ENCODE measurements at regions of chr1 and their contacts with region 1.

Region 1: DNA sequence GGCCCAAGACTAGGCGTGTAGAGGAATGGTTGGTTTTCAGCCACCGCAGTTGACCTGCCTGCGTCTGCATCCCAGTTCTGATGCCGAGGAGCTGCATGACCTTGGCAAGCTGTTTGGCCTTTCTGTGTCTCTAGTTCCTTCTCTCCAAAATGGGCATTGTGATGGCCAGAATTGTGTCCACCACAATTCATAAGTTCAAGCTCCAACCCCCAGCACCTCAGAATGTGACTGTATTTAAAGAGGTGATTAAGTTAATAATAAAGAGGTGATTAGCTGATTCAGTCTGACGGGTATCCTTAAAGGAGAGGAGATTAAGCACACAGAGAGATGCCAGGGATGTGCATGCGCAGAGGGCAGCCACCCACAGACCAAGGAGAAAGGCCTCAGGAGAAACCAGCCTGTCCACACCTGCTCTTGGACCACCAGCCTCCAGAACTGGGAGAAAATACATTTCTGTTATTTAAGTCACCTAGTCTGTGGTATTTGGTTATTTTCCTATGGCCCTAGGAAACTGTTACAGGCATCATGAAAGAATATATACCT is 28.5 kb downstream of the MAB21L3 start:
- DNase-seq: no peak
- ATAC-seq: no peak
- H3K4me3 Mint-ChIP-seq: no peak overlapping the region
- H3K27ac Mint-ChIP-seq: no peak overlapping the region
- H3K4me1 Mint-ChIP-seq: peaks cover 5% of the 10 kb centered on the region
- H3K27me3 Mint-ChIP-seq: peaks cover 5% of the 10 kb centered on the region
- CTCF ChIP-seq: no peak

Region 2: DNA sequence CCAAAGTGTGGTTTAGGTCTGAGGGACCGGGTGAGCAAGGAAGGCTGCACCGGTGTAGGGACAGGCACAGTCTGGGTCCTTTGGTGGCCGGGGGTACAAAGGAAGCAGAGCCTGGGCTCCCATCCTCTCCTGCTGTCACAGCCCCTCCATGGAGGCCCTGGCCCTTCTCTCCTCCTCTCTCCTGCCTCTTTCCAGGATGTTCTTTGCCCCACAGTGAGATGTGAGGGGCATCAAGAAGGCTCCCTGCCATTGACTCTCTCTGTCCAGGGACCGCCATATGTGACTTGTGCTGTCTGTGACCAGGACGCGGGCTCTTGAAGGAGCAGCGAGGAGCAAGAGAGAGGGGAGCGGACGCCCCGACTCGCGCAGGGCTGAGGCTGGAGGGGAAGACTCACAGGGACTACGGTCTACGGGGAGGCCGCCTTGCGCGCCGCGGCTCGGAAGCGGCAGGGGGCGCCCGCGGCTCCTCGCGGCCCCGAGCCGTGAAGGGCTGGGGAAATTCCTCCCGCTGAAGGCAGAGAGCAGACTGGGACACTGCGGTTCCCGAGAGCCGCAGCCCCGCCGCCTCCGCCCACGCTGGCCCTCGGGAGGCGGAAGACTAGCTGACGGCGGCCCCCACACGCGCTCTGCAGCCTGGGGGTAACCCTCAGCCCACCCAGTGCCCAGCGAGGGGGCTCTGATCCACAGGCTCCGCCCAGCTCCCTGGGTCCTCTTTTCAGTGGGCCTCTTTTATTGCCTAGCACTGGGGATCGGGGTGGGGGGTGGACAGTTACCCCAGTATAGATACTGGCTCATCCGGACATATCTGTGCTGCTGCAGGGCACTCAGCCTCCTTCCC is 12.3 kb after region 1 on chr1:
- CTCF ChIA-PET with region 1: interaction called, 73 read pairs
- POLR2A ChIA-PET with region 1: no interaction called
- intact Hi-C with region 1: no loop called
- DNase-seq: peak; percentile 76
- ATAC-seq: peak; percentile 98
- H3K4me3 Mint-ChIP-seq: peak overlapping the region; percentile 66
- H3K27ac Mint-ChIP-seq: peak overlapping the region; percentile 19
- H3K4me1 Mint-ChIP-seq: peaks cover 3% of the 10 kb centered on the region
- H3K27me3 Mint-ChIP-seq: peaks cover 4% of the 10 kb centered on the region
- CTCF ChIP-seq: peak; percentile 38

Region 3: DNA sequence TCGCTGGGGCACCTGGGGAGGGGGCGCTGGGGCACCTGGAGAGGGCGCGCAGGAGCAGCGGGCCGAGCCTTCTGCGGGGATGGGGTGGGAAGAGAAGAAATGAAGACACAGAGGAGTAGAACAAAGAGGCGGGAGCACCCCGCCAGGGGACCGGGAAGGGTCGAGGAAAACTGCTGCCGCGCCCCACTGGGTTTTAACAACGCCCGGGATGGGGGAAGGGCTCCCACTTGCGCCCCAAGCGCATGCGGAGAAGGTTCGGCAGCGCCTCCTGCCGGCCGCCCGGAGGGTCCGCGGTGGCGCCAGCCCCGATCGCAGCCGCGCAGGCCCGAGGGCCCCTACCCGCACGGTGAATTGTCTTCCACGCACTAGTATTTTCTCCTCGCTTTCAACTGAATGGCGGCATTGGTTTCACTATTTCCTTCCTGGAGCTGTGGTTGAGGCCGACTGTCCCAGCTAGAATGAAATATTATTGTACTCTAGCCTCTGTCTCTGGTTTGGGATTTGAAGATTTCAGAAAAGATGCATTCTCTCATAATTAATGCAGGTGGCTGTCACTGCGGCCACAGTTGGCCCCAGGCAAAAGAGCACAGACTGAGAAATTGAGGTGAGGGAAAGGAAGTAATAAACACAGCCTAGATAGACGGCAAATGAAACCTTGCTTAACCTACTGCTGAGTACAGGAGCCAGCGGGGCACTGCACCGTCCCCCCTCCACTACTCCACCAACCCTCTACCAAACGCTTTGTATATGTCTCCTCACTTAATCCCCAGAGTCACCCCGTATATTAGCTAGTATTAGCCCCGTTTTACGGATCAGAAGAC is 28.8 kb after region 1 on chr1:
- CTCF ChIA-PET with region 1: interaction called, 9 read pairs
- POLR2A ChIA-PET with region 1: no interaction called
- intact Hi-C with region 1: loop called (anchors 1 kb)
- DNase-seq: peak; percentile 75
- ATAC-seq: peak; percentile 98
- H3K4me3 Mint-ChIP-seq: peak overlapping the region; percentile 83
- H3K27ac Mint-ChIP-seq: peak overlapping the region; percentile 41
- H3K4me1 Mint-ChIP-seq: peaks cover 11% of the 10 kb centered on the region
- H3K27me3 Mint-ChIP-seq: peaks cover 6% of the 10 kb centered on the region
- CTCF ChIP-seq: peak; percentile 91

Region 4: DNA sequence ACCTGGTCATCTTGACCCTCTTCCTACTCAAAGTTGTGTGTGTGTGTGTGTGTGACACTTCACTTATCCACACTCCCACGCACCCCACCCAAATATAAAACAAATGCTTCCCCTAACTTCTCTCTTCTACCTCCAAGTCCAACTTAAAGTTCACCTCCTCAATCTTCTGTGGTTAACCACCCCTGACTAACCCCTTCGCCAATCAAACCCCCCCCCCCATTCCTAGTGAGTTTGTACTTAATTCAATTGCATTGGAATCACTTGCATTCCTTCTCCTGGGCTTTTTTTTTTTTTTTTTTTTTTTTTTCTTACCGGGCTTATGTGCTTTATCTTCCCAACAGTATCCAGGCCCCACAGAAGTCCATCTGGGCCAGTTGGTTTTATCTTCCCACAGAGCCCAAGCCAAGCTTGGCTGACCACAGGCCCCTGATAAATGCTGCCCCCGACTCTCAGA is 352.7 kb after region 1 on chr1:
- CTCF ChIA-PET with region 1: interaction called, 250 read pairs
- POLR2A ChIA-PET with region 1: interaction called, 3 read pairs
- intact Hi-C with region 1: no loop called
- DNase-seq: no peak
- ATAC-seq: no peak
- H3K4me3 Mint-ChIP-seq: no peak overlapping the region
- H3K27ac Mint-ChIP-seq: no peak overlapping the region
- H3K4me1 Mint-ChIP-seq: peaks cover 12% of the 10 kb centered on the region
- H3K27me3 Mint-ChIP-seq: no peaks in the 10 kb centered on the region
- CTCF ChIP-seq: no peak

Region 5: GRCh38 chr1:116498789-116499628 is 359.3 kb after region 1 on chr1:
- CTCF ChIA-PET with region 1: interaction called, 107 read pairs
- POLR2A ChIA-PET with region 1: interaction called, 5 read pairs
- intact Hi-C with region 1: loop called (anchors 1 kb)
- DNase-seq: no peak
- ATAC-seq: peak; percentile 68
- H3K4me3 Mint-ChIP-seq: no peak overlapping the region
- H3K27ac Mint-ChIP-seq: no peak overlapping the region
- H3K4me1 Mint-ChIP-seq: peaks cover 24% of the 10 kb centered on the region
- H3K27me3 Mint-ChIP-seq: no peaks in the 10 kb centered on the region
- CTCF ChIP-seq: no peak

Region 6: DNA sequence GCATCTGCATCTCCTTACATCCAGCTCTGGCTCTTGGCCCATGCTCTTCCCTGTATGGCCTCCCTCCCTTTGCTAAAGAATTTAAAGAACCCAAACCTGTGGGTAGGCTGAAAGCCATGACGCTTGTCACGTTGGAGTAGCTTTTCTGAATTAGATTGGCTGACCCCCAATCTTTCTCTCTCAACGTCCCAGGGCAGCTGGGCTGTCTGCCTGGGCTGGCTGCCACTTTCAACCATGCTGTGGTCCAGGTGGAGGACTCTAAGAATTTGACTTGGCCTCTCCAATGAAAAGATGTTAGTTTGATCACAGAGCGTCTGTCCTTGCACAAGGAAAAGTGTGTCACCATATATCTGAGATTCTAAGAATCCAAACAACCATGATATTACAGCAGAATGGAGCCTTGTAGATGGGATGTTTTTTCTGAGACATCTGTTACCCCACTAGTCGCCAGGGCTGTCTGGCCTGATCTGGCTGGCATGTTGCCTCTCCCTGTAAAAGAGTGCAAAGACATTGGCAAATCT is 534.4 kb after region 1 on chr1:
- CTCF ChIA-PET with region 1: interaction called, 19 read pairs
- POLR2A ChIA-PET with region 1: no interaction called
- intact Hi-C with region 1: loop called (anchors 2 kb)
- DNase-seq: no peak
- ATAC-seq: no peak
- H3K4me3 Mint-ChIP-seq: no peak overlapping the region
- H3K27ac Mint-ChIP-seq: no peak overlapping the region
- H3K4me1 Mint-ChIP-seq: peaks cover 3% of the 10 kb centered on the region
- H3K27me3 Mint-ChIP-seq: peaks cover 23% of the 10 kb centered on the region
- CTCF ChIP-seq: no peak